ENCODE measurements at regions of chr18 and their contacts with region 1.

Region 1: DNA sequence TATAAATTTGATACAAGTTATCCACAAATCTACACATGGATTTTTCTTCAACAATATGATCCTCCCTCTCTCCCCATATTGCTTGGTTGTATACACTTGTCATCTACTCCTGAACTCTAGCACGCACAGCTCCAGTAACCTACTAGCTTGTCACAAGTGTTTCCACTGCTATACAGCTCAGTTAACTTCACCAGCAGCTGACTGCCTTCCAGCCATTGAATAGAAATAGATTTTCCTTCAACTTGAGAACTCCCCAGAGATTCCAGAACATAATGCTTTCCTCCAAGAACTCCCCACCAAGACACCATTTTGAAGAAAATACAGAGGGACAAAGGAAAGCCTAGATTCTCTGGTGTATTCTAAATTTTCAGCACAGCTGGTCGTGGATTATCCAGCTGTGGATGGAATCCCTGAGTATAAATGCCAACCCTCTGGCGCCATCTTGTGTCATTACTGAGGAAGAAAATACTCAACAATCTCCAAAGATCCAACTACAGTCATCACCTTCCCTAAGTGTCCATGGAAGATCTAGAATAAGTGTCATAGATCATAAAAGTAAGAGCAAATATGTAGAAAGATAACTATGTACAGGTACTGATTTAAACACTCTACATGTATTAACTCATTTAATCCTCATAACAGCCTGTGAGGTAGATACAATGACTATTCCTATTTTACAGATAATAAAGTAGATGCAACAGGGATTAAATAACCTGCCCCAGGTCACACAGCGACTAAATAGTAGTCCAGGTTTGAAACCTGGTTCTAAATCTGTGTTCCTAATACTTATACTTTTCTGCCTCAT is 156.7 kb downstream of the ARHGAP28 start:
- DNase-seq: peak; percentile 40 to 87
- H3K4me3 ChIP-seq: no peak overlapping the region
- H3K27ac ChIP-seq: no peak overlapping the region
- H3K4me1 ChIP-seq: peaks cover 0 to 9% (median 3%) of the 10 kb centered on the region in 4 donors
- H3K27me3 ChIP-seq: no peaks in the 10 kb centered on the region
- CTCF ChIP-seq: peak in 4 of 7 experiments; percentile 18 to 76 (median 55)
- EP300 ChIP-seq: no peak
- POLR2A ChIP-seq: no peak

Region 2: GRCh38 chr18:6543330-6543908 is 342.8 kb before region 1 on chr18:
- intact Hi-C with region 1: loop called (anchors 2 kb)
- DNase-seq: peak in 1 of 2 donors; percentile 55
- H3K4me3 ChIP-seq: no peak overlapping the region
- H3K27ac ChIP-seq: no peak overlapping the region
- H3K4me1 ChIP-seq: no peaks in the 10 kb centered on the region
- H3K27me3 ChIP-seq: no peaks in the 10 kb centered on the region
- CTCF ChIP-seq: peak in 3 of 7 experiments; percentile 40 to 41 (median 41)
- EP300 ChIP-seq: no peak
- POLR2A ChIP-seq: no peak

Measured in stomach (tissue), 19 donors.